Activated CD4-positive, alpha-beta memory T cell treated with anti-CD3 and anti-CD28 coated beads for 36 hours (primary cell): ENCODE measurements at regions of chr2 and their contacts with region 1.

Region 1: DNA sequence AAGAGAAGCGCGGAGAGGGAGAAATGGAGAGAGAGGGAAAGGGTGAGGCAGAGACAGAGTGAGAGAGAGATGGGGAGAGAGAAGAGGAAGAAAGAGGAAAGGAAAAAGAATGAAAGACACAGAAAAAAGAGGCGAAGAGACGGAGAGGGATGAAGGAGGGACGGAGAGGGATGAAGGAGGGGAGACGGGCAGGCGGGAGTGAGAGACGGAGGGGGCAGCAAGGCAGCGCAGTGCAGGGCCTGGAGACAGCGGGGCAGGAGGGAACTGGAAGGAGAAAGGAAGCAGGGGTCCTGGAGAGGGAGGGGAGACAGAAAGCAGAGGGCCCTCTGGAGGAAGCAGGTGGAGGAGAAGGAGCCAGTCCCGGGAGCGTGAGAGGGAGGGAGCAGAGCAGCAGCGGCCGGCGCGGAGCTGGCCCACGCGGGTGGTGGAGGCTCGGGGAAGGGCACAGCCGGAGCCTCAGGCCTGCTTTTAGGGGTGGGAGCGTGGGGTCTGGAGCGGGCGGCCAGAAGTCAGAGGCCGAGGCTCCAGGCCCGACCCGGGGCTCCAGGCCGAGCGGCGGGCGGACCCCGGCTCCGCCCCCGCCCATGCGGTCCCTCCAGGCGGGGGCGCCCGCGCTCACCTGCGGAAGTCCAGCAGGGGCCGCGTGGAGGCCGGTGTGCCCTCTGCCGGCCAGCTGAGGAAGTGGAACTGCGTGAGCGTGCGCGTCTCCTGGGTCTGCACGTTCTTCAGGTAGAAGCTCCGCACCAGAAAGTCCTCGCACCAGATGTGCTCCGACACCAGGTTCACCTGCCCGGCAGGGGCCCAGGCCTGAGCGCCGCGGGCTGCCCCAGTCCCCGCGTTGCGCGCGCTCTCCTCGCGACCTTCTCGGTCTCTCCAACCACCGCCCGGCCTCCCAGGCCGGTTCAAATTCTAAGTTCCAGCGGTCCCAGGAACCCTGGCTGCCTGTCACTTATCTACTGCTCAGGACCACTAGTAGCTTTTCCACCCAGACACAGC is 14.5 kb downstream of the PTPRN start:
- DNase-seq: peak; percentile 92
- H3K4me3 Mint-ChIP-seq: peak overlapping the region; percentile 55
- H3K27ac Mint-ChIP-seq: peak overlapping the region; percentile 21
- H3K4me1 Mint-ChIP-seq: peaks cover 11% of the 10 kb centered on the region
- H3K27me3 Mint-ChIP-seq: peaks cover 7% of the 10 kb centered on the region

Region 2: GRCh38 chr2:219057709-219058540 is 236.7 kb before region 1 on chr2:
- CTCF ChIA-PET with region 1: interaction called, 17 read pairs
- POLR2A ChIA-PET with region 1: no interaction called
- intact Hi-C with region 1: loop called (anchors 5 kb)
- DNase-seq: peak; percentile 87
- H3K4me3 Mint-ChIP-seq: peak overlapping the region; percentile 46
- H3K27ac Mint-ChIP-seq: no peak overlapping the region
- H3K4me1 Mint-ChIP-seq: peaks cover 26% of the 10 kb centered on the region
- H3K27me3 Mint-ChIP-seq: peaks cover 62% of the 10 kb centered on the region

Region 3: DNA sequence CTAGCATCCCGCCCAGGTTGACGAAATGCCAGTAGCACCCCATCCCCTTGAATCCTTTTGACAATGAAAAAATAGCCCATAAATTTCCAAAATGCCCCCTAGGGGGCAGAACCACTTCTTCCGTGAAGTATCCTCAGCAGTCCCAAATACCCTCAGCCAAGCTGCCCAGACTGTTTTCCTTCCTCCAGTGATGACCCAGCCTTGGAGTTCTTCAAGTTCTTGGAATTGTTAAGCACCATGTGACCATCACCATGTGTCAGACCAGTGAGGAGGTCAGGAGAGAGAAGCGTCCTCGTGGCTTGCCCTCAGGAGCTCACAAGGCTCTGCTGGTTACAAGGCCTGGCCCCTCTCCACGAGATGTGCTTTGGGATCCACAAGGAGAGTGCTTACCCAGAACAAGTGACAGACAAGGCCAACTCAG is 123.4 kb before region 1 on chr2:
- CTCF ChIA-PET with region 1: interaction called, 27 read pairs
- POLR2A ChIA-PET with region 1: interaction called, 6 read pairs
- intact Hi-C with region 1: loop called (anchors 2 kb)
- DNase-seq: peak; percentile 27
- H3K4me3 Mint-ChIP-seq: no peak overlapping the region
- H3K27ac Mint-ChIP-seq: peak overlapping the region; percentile 54
- H3K4me1 Mint-ChIP-seq: peaks cover 35% of the 10 kb centered on the region
- H3K27me3 Mint-ChIP-seq: no peaks in the 10 kb centered on the region

Region 4: DNA sequence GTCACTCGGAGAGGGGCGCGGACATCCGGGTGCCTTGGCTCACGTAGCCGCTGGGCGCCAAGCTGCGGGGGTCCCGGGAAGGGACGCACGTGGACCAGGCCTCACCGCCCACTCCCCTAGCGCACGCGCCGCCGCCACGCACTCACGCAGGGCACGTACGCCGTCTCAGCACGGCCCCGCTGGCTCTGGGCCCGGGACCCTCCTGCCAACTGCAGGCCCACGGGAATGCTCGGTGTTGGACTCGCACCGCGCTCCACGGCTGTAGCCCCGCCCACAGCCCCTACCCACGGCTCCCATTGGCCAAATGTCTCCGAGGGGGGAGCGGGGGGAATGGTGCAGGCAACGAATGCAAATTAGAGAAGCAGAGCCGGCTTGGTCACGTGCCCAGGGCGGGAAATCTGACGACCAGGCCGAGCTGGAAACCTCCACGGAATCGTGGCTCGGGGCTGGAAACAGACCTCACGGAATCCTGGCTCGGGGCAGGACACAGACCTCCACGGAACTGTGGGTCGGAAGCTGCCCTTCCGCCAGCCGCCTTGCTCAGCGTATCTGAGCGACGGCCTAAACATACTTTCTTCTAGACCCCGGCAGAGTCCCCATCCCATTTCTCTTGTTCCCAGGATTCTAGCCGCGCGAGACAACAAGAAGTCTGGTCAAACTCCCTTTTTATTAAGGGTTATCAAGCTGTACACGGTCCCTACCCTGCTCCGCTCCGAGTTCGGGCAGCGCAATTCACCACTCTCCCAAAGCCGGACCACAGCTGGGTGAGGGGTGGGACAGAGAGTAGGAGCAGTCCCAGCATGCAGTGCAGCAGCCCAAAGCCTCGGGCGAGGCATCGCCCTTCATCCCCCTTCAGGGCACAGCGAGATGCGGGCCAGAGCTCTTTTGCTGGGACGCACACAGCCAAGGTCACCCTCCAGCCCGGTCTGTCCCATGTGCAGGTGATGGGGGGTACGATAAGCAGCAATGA is 75.6 kb before region 1 on chr2 and contains the start of gene ABCB6:
- CTCF ChIA-PET with region 1: interaction called, 16 read pairs
- POLR2A ChIA-PET with region 1: interaction called, 4 read pairs
- intact Hi-C with region 1: no loop called
- DNase-seq: peak; percentile 92
- H3K4me3 Mint-ChIP-seq: peak within 1 kb of the TSS; percentile 80
- H3K27ac Mint-ChIP-seq: peak within 1 kb of the TSS; percentile 69
- H3K4me1 Mint-ChIP-seq: peaks cover 19% of the 10 kb centered on the region
- H3K27me3 Mint-ChIP-seq: no peaks in the 10 kb centered on the region
- total RNA-seq, gene ABCB6: 11.5 to 11.7 TPM

Region 5: DNA sequence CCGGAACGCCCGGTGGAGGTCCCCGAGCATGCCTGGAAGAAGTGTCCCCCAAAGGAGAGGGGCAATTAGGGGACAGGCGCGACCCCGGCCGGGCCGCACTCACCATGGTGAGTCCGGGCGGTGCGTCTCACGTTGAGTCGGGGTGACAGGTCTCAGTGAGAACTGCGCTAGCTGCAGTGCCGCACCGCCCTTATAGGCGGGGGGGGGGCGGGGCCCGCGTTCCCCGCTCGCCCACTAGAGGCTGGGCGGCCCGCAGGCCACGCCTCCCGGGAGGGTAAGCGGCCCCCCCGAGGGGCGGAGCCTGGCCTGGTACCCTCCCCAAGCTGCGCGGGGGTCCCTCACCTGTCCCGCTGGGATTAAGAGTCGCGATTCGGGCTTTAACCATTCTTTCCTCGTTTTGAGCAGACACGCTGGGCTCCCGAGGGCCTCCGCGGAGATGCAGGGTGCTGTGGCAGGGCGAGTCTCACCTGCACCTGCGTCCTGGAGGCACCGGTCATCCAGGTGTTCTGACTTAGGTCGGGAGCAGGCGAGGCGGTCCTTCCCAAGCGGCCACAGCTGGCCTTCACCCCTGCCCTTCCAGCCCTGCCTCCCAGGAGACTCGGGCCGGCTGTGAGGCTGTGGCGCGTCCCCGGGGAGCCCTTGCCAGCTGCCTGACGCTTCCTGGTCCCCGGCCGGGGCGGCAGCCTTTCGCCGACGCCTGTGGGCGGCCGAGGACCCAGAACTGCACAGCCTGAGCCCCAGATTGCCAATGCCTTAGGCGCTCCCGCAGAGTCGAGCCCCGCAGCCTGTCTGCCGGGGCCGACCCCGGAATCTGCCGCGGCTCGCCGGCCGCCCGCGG is 40.7 kb before region 1 on chr2 and contains the start of gene TUBA4A:
- CTCF ChIA-PET with region 1: interaction called, 87 read pairs
- POLR2A ChIA-PET with region 1: interaction called, 11 read pairs
- intact Hi-C with region 1: loop called (anchors 1 kb)
- DNase-seq: peak; percentile 92
- H3K4me3 Mint-ChIP-seq: peak within 1 kb of the TSS; percentile 86
- H3K27ac Mint-ChIP-seq: peak within 1 kb of the TSS; percentile 97
- H3K4me1 Mint-ChIP-seq: peaks cover 49% of the 10 kb centered on the region
- H3K27me3 Mint-ChIP-seq: no peaks in the 10 kb centered on the region
- total RNA-seq, gene TUBA4A: 219 to 229 TPM

Region 6: GRCh38 chr2:219308142-219309093 is 13.8 kb after region 1 on chr2:
- CTCF ChIA-PET with region 1: interaction called, 14 read pairs
- POLR2A ChIA-PET with region 1: no interaction called
- intact Hi-C with region 1: no loop called
- DNase-seq: peak; percentile 78
- H3K4me3 Mint-ChIP-seq: no peak overlapping the region
- H3K27ac Mint-ChIP-seq: no peak overlapping the region
- H3K4me1 Mint-ChIP-seq: no peaks in the 10 kb centered on the region
- H3K27me3 Mint-ChIP-seq: peaks cover 38% of the 10 kb centered on the region